ENCODE measurements at regions of chr12 and their contacts with region 1.

Region 1: DNA sequence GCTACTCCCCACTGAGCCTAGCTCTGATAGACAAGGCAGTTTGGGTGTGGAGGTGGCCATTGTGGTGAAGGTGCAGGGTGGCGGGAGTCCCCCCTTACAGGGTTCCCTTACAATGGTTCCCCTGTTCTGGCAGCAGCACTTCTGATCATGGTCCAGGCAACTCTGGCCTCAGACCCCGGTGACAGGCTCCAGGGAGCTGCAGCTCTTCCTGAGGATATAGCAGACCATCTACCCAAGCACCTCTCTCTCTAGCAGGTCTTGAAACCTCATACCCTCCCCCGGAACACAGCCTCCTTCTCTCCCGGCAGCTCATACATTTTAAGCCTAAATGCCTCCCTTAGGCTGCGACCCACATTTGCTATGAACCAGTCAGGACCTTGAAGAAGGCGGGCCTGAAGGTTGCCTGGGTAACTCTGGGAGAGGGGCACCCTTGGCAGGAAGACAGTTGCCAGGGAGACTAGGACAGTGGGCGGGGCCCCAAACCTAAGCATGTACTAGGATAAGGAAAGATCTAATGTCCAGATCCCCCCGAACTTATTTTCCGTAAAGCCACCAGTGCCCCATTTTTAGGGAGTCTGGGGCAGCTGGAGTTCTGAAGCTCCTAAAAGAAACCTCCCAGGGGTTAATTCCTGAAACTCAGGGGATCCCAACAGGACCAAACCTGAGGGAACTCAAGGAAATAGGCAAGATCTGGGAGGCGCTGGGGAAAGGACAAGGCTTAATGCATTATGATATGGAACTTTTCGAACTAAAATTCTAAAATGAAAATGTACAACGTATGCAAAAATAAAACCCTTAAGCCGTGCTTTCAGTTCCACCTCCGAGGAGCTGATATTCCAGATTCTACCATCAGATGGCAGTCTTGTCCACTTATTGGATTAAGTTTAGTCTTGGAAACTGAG is 4.5 kb upstream of the GDF11 start:
- DNase-seq: no peak
- ATAC-seq: peak; percentile 70 to 79
- H3K4me3 ChIP-seq: peak overlapping the region; percentile 48 to 63 (median 59)
- H3K27ac ChIP-seq: peak overlapping the region; percentile 28 to 50 (median 46)
- H3K4me1 ChIP-seq: peaks cover 6 to 11% of the 10 kb centered on the region in 2 donors
- H3K27me3 ChIP-seq: no peaks in the 10 kb centered on the region
- CTCF ChIP-seq: peak; percentile 80 to 96 (median 85)
- POLR2A ChIP-seq: no peak

Region 2: GRCh38 chr12:55765736-55766290 is 27.4 kb after region 1 on chr12:
- in situ Hi-C with region 1: no loop called
- intact Hi-C with region 1: no loop called
- DNase-seq: no peak
- ATAC-seq: no peak
- H3K4me3 ChIP-seq: no peak overlapping the region
- H3K27ac ChIP-seq: no peak overlapping the region
- H3K4me1 ChIP-seq: no peaks in the 10 kb centered on the region
- H3K27me3 ChIP-seq: no peaks in the 10 kb centered on the region
- CTCF ChIP-seq: no peak
- POLR2A ChIP-seq: no peak

Region 3: GRCh38 chr12:55797068-55797467 is 58.7 kb after region 1 on chr12:
- in situ Hi-C with region 1: no loop called
- intact Hi-C with region 1: loop called (anchors 2 kb)
- DNase-seq: no peak
- ATAC-seq: no peak
- H3K4me3 ChIP-seq: no peak overlapping the region
- H3K27ac ChIP-seq: no peak overlapping the region
- H3K4me1 ChIP-seq: no peaks in the 10 kb centered on the region
- H3K27me3 ChIP-seq: no peaks in the 10 kb centered on the region
- CTCF ChIP-seq: peak in 4 of 5 experiments; percentile 6 to 38 (median 22)
- POLR2A ChIP-seq: no peak

Region 4: GRCh38 chr12:55829967-55830600 is 91.7 kb after region 1 on chr12:
- in situ Hi-C with region 1: loop called in 1 of 4 experiments (anchors 10 kb)
- intact Hi-C with region 1: no loop called
- DNase-seq: no peak
- ATAC-seq: peak in 1 of 2 donors; percentile 8
- H3K4me3 ChIP-seq: peak overlapping the region; percentile 85 to 97 (median 96)
- H3K27ac ChIP-seq: peak overlapping the region; percentile 82 to 89 (median 88)
- H3K4me1 ChIP-seq: peaks cover 33 to 39% of the 10 kb centered on the region in 2 donors
- H3K27me3 ChIP-seq: no peaks in the 10 kb centered on the region
- CTCF ChIP-seq: no peak
- POLR2A ChIP-seq: no peak

Region 5: DNA sequence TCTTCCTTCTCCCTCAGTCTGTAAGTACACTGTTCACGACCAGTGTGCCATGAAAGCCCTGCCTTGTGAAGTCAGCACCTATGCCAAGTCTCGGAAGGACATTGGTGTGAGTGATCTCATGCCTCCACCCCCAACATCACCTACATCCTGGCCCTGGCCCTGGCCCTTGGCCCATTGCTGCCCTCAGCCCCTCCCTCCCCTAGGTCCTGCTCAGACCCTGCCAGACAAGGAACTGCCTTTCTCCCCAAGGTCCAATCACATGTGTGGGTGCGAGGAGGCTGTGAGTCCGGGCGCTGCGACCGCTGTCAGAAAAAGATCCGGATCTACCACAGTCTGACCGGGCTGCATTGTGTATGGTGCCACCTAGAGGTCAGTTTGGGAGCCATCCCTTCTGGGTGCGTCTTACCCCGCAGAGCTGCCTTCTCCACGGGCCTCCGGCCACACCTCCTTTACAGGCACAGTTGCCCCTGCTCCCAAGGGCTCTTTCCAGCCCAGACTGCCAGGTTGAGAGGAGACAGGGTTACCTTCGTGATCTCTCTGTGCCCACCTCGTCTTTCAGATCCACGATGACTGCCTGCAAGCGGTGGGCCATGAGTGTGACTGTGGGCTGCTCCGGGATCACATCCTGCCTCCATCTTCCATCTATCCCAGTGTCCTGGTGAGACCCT is 201.8 kb after region 1 on chr12:
- in situ Hi-C with region 1: loop called (anchors 5 kb)
- intact Hi-C with region 1: loop called (anchors 1 kb)
- DNase-seq: peak; percentile 66 to 75
- ATAC-seq: peak; percentile 92 to 99
- H3K4me3 ChIP-seq: peak overlapping the region; percentile 25 to 43 (median 37)
- H3K27ac ChIP-seq: no peak overlapping the region
- H3K4me1 ChIP-seq: peaks cover 0 to 5% of the 10 kb centered on the region in 2 donors
- H3K27me3 ChIP-seq: peaks cover 0 to 5% (median 2%) of the 10 kb centered on the region in 3 donors
- CTCF ChIP-seq: peak; percentile 74 to 95 (median 88)
- POLR2A ChIP-seq: no peak